ENCODE measurements at regions of chr1 and their contacts with region 1.

Region 1: GRCh38 chr1:32933742-32934322 is 30.8 kb downstream of the RNF19B start:
- DNase-seq: peak; percentile 47
- H3K4me3 Mint-ChIP-seq: peak overlapping the region; percentile 2
- H3K27ac Mint-ChIP-seq: no peak overlapping the region
- H3K4me1 Mint-ChIP-seq: peaks cover 10% of the 10 kb centered on the region
- H3K27me3 Mint-ChIP-seq: no peaks in the 10 kb centered on the region
- CTCF ChIP-seq: no peak

Region 2: DNA sequence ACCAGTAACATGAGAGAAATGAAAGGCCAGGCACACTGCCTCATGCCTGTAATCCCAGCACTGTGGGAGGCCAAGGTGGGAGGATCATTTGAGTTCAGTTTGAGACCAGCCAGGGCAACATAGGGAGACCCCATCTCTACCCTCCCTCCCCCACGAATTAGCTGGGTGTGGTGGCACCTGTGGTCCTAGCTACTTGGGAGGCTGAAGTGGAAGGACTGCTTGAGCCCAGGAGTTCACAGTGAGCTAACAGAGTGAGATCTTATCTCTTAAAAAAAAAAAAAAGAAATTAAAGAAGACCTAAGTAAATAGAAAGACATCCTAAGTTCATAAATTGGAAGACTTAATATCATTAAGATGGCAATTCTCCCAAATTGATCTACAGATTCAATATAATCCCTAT is 25.2 kb before region 1 on chr1:
- CTCF ChIA-PET with region 1: no interaction called
- POLR2A ChIA-PET with region 1: no interaction called
- intact Hi-C with region 1: no loop called
- DNase-seq: no peak
- H3K4me3 Mint-ChIP-seq: no peak overlapping the region
- H3K27ac Mint-ChIP-seq: no peak overlapping the region
- H3K4me1 Mint-ChIP-seq: no peaks in the 10 kb centered on the region
- H3K27me3 Mint-ChIP-seq: no peaks in the 10 kb centered on the region
- CTCF ChIP-seq: no peak

Region 3: DNA sequence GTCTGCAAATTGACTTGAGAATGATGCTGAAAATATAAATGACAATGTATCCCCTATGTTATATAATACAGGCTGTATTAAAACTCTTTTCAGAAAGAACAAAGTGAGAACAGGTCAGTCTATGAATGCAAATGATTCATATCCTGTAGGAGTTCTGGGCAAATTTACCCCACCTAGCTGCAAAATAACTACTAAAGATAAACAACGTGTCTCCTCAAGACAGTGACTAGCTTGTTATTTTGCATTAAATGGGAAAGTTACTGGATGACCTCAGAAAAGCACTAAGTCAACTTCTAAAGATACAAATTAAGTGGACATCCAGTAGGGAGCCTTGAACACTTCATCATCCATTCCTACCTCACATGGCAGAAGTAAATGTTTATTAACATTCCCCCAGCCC is 19.7 kb after region 1 on chr1:
- CTCF ChIA-PET with region 1: interaction called, 11 read pairs
- POLR2A ChIA-PET with region 1: interaction called, 10 read pairs
- intact Hi-C with region 1: no loop called
- DNase-seq: peak; percentile 70
- H3K4me3 Mint-ChIP-seq: no peak overlapping the region
- H3K27ac Mint-ChIP-seq: peak overlapping the region; percentile 87
- H3K4me1 Mint-ChIP-seq: peaks cover 14% of the 10 kb centered on the region
- H3K27me3 Mint-ChIP-seq: no peaks in the 10 kb centered on the region
- CTCF ChIP-seq: no peak

Region 4: DNA sequence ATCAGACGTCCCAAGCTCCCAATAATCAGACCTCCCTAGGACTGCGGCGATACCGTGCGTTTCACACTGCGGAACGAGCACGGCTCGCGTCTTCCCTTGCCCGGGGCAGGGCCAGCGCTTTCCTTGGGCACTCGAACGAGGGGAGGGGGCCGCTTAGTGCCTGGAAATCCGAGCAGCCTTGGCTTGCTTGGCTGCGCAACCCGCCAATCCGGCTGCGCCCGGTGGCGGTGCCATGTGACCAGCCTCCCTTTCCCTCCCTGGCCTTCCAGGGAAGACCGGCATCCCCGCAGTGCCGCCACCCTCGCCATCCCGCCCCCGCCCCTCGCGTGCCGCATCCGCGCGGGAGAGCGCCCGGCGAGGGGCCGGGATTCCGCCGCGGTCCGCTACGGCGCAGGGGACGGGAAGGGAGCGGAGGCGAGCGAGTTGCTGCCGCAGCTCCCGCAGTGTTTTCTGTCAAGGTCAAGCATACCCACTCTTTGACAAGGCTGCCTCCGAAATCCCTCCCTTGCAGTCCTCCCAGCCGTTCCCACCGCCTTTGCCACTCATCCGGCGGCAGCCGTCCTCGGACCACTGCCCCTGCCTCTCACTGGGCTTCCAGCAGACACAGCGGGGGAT is 39.1 kb after region 1 on chr1:
- CTCF ChIA-PET with region 1: interaction called, 14 read pairs
- POLR2A ChIA-PET with region 1: interaction called, 5 read pairs
- intact Hi-C with region 1: no loop called
- DNase-seq: no peak
- H3K4me3 Mint-ChIP-seq: peak overlapping the region; percentile 71
- H3K27ac Mint-ChIP-seq: peak overlapping the region; percentile 66
- H3K4me1 Mint-ChIP-seq: peaks cover 13% of the 10 kb centered on the region
- H3K27me3 Mint-ChIP-seq: no peaks in the 10 kb centered on the region
- CTCF ChIP-seq: no peak

Region 5: GRCh38 chr1:33080885-33081553 is 147.2 kb after region 1 on chr1 and contains the start of gene AZIN2:
- CTCF ChIA-PET with region 1: interaction called, 58 read pairs
- POLR2A ChIA-PET with region 1: interaction called, 6 read pairs
- intact Hi-C with region 1: loop called (anchors 1 kb)
- DNase-seq: peak; percentile 94
- H3K4me3 Mint-ChIP-seq: peak within 1 kb of the TSS; percentile 75
- H3K27ac Mint-ChIP-seq: peak within 1 kb of the TSS; percentile 59
- H3K4me1 Mint-ChIP-seq: peaks cover 20% of the 10 kb centered on the region
- H3K27me3 Mint-ChIP-seq: no peaks in the 10 kb centered on the region
- CTCF ChIP-seq: no peak
- total RNA-seq, gene AZIN2: 1.6 and 4.3 TPM in 2 replicates

Measured in MCF 10A (cell line).